AG04450 (cell line): ENCODE measurements at regions of chr9 and their contacts with region 1.

Region 1: DNA sequence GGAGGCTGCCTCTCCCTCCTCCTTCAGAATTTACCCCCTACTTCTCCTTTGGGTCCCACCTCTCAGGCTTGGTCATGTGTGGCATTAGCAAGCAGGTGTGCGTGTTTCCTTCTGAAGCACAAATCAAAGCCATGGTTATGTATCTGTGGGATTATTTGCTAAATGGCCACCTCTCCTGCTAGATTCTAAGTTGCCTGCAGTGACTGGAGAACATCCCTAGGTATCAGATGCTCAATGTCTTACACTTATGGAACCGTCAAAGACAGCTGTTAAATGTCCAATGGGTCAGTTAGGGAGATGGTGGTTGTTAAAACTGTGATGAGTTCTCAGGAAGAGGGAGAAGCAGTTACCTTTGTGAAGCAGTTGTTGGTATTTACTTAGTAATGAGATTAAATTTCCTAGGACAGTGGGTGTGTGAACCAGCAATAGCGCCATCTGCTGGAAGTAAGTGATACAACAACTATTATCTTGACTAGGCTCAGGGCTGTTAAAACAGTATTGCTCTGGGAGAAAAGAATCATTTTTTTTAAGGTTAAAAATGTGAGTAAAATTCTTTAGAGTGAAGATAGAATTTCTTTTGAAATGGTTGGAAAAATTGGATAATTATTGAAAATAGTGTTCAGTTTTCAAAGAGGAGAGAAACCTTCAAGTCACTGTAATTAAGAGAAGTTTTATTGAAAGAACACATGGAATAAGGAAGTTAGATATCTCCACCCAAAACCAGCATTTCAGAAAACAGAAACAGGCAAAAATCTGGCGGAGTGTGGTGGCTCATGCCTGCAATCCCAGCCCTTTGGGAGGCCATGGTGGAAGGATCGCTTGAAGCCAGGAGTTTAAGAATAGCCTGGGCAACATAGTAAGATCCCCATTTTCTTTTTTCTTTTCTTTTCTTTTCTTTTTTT is 71.3 kb downstream of the TMC1 start:
- DNase-seq: peak; percentile 42
- H3K4me3 ChIP-seq: no peak overlapping the region
- H3K27ac ChIP-seq: no peak overlapping the region
- H3K27me3 ChIP-seq: no peaks in the 10 kb centered on the region
- CTCF ChIP-seq: peak; percentile 75

Region 2: GRCh38 chr9:72356041-72356582 is 236.6 kb before region 1 on chr9:
- CTCF ChIA-PET with region 1: interaction called, 23 read pairs
- POLR2A ChIA-PET with region 1: interaction called, 3 read pairs
- DNase-seq: no peak
- H3K4me3 ChIP-seq: no peak overlapping the region
- H3K27ac ChIP-seq: no peak overlapping the region
- H3K27me3 ChIP-seq: no peaks in the 10 kb centered on the region
- CTCF ChIP-seq: no peak

Region 3: DNA sequence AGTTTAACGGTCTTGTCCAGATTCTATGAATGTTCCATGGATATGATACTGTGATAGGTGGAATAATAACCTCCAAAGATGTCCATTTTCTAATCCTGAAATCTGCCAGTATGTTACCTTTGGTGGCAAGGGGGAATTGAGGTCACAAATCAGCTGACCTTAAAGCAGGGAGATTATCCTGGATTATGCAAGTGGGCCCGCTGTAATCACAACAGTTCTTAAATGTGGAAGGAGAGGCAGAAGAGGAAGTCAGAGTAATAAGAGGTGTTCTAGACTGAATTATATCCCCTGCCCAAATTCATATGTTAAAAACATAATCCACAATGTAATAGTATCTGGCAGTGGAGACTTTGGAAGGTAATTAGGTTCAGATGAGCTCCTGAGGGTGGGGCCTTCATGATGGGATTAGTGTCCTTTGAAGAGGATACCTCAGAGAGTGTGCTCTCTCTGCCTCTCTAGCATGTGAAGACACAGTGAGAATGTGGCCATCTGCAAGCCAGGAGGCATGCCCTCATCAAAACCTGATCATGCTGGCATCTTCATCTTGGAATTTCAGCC is 180.2 kb before region 1 on chr9:
- CTCF ChIA-PET with region 1: no interaction called
- POLR2A ChIA-PET with region 1: no interaction called
- DNase-seq: no peak
- H3K4me3 ChIP-seq: no peak overlapping the region
- H3K27ac ChIP-seq: no peak overlapping the region
- H3K27me3 ChIP-seq: no peaks in the 10 kb centered on the region
- CTCF ChIP-seq: no peak